ENCODE measurements at regions of chr6 and their contacts with region 1.

Region 1: GRCh38 chr6:2158596-2159271 is 86.7 kb downstream of the GMDS start:
- DNase-seq: no peak
- H3K4me3 Mint-ChIP-seq: no peak overlapping the region
- H3K27ac Mint-ChIP-seq: peak overlapping the region; percentile 86
- H3K4me1 Mint-ChIP-seq: peaks cover 32% of the 10 kb centered on the region
- H3K27me3 Mint-ChIP-seq: no peaks in the 10 kb centered on the region
- CTCF ChIP-seq: no peak

Region 2: DNA sequence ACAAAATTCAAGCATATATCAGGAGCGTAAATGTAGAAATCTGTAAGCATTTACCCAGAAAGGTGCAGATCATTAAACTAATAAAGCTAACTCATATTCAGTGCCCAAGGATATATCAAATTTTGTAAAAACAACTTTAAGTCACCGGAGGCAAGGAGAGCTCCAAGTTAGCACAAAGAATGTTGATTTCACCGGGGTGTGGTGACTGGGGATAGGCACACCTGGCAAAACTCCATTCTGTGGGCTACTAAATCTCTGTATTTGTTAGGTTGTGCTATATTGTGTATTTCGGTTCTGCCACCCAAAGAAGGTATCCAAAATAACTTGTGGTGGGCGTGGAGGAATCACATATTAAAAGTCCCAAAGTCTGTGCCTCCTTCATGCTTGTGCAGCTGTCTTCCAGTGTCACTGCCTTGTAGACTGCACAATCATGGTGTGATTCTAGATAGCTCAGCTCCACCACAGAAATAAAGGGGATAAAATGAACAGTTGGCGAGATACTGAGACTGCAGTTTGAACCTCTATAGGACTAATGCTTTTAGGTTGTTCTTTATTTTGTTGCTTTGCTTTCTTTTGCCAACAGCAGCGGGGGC is 24.9 kb before region 1 on chr6:
- CTCF ChIA-PET with region 1: interaction called, 3 read pairs
- POLR2A ChIA-PET with region 1: interaction called, 10 read pairs
- intact Hi-C with region 1: no loop called
- DNase-seq: peak; percentile 28
- H3K4me3 Mint-ChIP-seq: peak overlapping the region; percentile 19
- H3K27ac Mint-ChIP-seq: peak overlapping the region; percentile 35
- H3K4me1 Mint-ChIP-seq: peaks cover 25% of the 10 kb centered on the region
- H3K27me3 Mint-ChIP-seq: no peaks in the 10 kb centered on the region
- CTCF ChIP-seq: no peak

Measured in MCF 10A (cell line).